Right cardiac atrium (tissue), 5 donors: ENCODE measurements at regions of chrX and their contacts with region 1.

Region 1: DNA sequence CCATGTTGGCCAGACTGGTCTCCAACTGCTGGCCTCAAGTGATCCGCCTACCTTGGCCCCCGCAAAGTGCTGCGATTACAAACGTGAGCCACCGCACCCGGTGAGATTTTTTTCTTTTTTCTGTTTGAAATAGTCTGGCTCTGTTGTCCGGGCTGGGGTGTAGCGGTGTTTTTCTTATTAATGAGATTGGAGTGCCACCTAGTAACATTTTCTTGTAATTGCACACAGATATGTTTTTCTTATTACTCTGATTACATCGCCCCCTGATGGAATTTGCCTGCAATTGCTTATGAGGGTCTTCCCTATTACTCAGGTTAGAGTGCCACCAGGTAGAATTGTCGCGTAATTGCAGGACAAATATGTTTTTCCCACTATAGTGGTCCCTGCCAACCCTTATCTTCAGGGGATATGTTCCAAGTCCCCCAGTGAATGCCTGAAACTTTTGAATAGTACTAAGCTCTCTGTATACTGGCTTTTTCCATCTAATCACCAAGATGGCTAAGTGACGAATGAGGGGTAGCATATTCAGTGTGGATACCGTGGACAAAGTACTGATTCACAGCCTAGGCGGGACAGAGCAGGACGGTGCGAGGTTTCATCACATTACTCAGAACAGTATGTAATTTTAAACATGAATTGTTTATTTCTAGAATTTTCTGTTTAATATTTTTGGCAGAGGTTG is 8.6 kb upstream of the PDHA1 start:
- DNase-seq: no peak
- ATAC-seq: no peak
- H3K4me3 ChIP-seq: no peak overlapping the region
- H3K27ac ChIP-seq: no peak overlapping the region
- H3K4me1 ChIP-seq: peaks cover 1% of the 10 kb centered on the region
- H3K27me3 ChIP-seq: no peaks in the 10 kb centered on the region

Region 2: DNA sequence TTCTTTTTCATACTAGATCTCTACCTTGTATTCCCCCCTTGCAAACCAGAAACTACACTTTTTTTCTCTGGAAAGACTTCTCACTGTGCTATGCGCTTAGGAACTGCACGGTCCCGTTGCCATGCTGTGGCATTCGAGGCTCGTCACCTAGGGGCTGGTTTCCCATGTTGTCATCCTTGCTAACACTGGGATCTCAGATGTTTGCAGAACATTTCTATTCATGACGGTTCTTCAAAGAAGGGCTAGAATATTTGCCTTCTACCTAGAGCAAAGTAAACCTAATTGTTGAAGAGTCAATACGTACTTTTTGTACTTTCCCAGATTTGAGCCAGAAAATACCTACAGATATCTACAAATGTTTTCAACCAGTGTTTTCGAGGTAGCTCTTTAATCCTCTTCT is 704.2 kb before region 1 on chrX:
- intact Hi-C with region 1: no loop called
- DNase-seq: no peak
- ATAC-seq: no peak
- H3K4me3 ChIP-seq: no peak overlapping the region
- H3K27ac ChIP-seq: no peak overlapping the region
- H3K4me1 ChIP-seq: no peaks in the 10 kb centered on the region
- H3K27me3 ChIP-seq: no peaks in the 10 kb centered on the region

Region 3: GRCh38 chrX:18931972-18932371 is 403.1 kb before region 1 on chrX:
- intact Hi-C with region 1: loop called in 3 of 4 experiments (anchors 10 kb)
- DNase-seq: no peak
- ATAC-seq: peak in 1 of 2 donors; percentile 58
- H3K4me3 ChIP-seq: no peak overlapping the region
- H3K27ac ChIP-seq: no peak overlapping the region
- H3K4me1 ChIP-seq: no peaks in the 10 kb centered on the region
- H3K27me3 ChIP-seq: no peaks in the 10 kb centered on the region

Region 4: DNA sequence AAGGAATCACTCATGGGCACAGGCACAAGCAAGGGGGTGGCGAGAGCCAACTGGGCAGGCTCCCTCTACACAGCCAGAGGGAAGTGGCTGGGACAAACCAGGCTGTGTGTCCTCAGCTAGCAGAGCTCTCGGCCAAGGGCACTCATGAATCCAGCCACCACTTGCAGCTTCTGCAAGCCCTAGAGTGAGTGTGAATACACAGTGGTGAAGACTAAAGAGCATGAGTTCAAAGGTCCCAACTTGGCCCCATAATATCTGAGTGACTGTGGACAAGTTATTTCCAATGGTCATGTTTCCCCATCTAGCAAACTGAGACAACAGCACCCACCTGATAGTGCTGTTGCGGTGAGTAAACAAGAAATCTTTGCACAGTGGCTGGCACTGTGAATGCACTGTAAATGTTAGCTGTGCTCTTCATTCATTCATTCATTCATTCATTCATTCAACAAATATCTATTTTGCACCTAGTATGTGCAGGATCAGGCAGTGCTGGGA is 264.5 kb before region 1 on chrX:
- intact Hi-C with region 1: no loop called
- DNase-seq: peak in 1 of 3 donors; percentile 38
- ATAC-seq: no peak
- H3K4me3 ChIP-seq: no peak overlapping the region
- H3K27ac ChIP-seq: no peak overlapping the region
- H3K4me1 ChIP-seq: no peaks in the 10 kb centered on the region
- H3K27me3 ChIP-seq: no peaks in the 10 kb centered on the region